ENCODE measurements at regions of chrX and their contacts with region 1.

Region 1: DNA sequence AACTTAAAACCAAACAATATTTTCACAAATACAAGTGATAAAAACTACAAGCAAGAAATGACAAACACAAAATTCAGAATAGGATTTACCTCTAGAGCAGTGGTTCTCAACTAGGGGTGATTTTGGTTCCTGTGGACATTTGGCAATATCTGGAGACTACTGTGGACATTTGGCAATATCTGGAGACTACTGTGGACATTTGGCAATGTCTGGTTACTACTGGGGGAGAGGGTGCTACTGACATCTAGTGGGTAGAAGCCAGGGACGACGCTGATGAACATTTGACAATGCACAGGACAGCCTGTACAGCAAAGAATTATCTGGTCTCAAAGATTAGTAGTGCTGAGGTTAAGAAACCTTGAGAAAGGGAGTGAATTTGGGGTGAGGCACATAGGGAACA is 169.8 kb downstream of the CLCN4 start:
- DNase-seq: peak; percentile 50 to 54
- H3K4me3 ChIP-seq: no peak overlapping the region
- H3K4me3 Mint-ChIP-seq: no peak overlapping the region
- H3K27ac Mint-ChIP-seq: no peak overlapping the region
- H3K4me1 ChIP-seq: peaks cover 17% of the 10 kb centered on the region
- H3K4me1 Mint-ChIP-seq: no peaks in the 10 kb centered on the region
- H3K27me3 ChIP-seq: no peaks in the 10 kb centered on the region
- H3K27me3 Mint-ChIP-seq: no peaks in the 10 kb centered on the region
- CTCF ChIP-seq: peak; percentile 26 to 48

Region 2: GRCh38 chrX:10254741-10255140 is 71.8 kb before region 1 on chrX:
- CTCF ChIA-PET with region 1: no interaction called
- POLR2A ChIA-PET with region 1: no interaction called
- intact Hi-C with region 1: loop called (anchors 1 kb)
- DNase-seq: peak in 1 of 2 experiments; percentile 7
- H3K4me3 ChIP-seq: no peak overlapping the region
- H3K4me3 Mint-ChIP-seq: no peak overlapping the region
- H3K27ac Mint-ChIP-seq: no peak overlapping the region
- H3K4me1 ChIP-seq: no peaks in the 10 kb centered on the region
- H3K4me1 Mint-ChIP-seq: no peaks in the 10 kb centered on the region
- H3K27me3 ChIP-seq: no peaks in the 10 kb centered on the region
- H3K27me3 Mint-ChIP-seq: no peaks in the 10 kb centered on the region
- CTCF ChIP-seq: no peak

Region 3: DNA sequence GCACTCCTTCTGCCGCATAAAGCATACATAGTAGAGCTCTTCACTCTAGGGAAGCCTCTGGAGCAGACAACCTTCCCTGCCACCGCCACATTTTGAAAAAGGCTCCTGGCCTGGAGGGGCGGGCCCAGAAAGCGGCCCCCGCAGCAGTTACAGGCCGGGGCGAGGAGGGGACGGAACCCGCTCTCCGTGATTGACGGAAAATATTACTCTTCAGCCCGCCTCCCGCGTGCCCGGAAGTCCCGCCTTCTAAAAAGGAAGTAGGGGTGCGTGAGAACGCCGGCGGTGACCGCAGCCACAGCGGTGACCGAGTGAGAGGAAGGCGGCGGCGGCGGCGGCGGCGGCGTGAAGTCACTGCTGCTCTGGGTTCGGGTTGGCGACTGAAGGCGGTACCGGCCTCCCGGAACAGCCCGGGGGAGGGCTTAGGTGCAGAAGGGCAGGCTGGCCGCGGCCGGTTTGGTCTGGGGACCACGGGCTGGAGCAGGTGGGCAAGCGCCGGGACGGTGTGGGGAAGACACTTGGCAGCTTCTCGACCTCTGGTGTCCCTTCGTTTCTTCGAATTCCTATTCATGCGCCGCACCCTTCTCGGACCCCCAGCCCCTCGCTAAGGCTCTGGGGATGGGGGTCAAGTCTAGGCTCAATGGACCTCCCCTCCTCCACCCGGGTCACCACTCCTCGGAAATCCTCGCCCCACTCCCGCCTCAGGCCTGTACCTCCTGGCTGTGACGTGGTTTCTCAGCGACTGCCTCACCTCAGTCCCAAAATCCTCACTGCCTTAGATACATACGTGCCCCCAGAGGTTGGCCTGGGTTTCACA is 784.7 kb after region 1 on chrX and contains the start of gene HCCS:
- CTCF ChIA-PET with region 1: no interaction called
- POLR2A ChIA-PET with region 1: no interaction called
- intact Hi-C with region 1: loop called (anchors 5 kb)
- DNase-seq: peak; percentile 85 to 86
- H3K4me3 ChIP-seq: peak within 1 kb of the TSS; percentile 82
- H3K4me3 Mint-ChIP-seq: no peak within 1 kb of the TSS
- H3K27ac Mint-ChIP-seq: peak within 1 kb of the TSS; percentile 97
- H3K4me1 ChIP-seq: no peaks in the 10 kb centered on the region
- H3K4me1 Mint-ChIP-seq: no peaks in the 10 kb centered on the region
- H3K27me3 ChIP-seq: no peaks in the 10 kb centered on the region
- H3K27me3 Mint-ChIP-seq: no peaks in the 10 kb centered on the region
- CTCF ChIP-seq: no peak
- total RNA-seq, gene HCCS: 39.8 and 42.4 TPM in 2 replicates

Measured in Caco-2 (cell line).